ENCODE measurements at regions of chr5 and their contacts with region 1.

Region 1: DNA sequence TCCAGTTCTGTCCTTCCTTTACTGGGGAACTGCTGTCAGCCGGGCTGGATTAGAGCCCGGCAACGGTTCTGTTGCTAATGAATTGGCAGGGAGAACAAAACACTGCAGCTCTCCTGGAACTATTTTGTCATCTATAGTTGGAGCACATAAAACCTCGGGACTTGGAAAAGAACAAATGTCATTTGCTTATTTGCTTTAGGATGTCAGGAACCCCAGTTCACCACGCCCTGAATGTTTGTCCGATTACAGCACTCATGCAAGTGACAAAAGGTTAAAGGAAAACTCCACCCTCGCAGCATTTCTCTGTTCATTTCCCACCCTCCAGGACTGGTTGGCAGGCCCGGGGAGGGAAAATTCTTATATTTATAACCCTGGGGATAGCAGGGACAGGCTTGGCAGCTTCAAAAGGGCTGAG is 66.4 kb upstream of the PLPP1 start:
- DNase-seq: peak; percentile 63 to 97
- H3K4me3 ChIP-seq: peak overlapping the region in 1 of 2 donors; percentile 36
- H3K27ac ChIP-seq: peak overlapping the region; percentile 92 to 93
- H3K4me1 ChIP-seq: peaks cover 21 to 79% of the 10 kb centered on the region in 2 donors
- H3K27me3 ChIP-seq: no peaks in the 10 kb centered on the region
- CTCF ChIP-seq: no peak

Region 2: DNA sequence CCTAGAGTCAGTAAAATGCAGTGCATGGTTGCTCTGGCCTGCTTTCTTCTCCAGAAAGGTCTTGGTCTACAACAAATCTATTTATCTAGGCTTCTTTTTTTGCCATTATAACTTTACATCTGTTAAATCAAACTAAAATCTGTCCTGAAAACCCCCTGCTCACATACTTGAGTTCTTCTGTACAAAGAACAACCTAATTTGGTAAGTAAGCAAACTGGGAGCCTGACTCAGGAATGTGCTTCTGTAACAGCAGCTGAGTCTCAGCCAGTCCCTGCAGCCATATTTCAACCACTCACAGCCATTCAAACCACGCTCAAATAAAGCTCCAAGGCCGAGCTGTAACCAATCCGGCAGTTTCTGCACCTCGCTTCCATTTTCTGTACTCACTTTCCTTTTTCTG is 162.2 kb before region 1 on chr5:
- intact Hi-C with region 1: loop called (anchors 5 kb)
- DNase-seq: peak in 1 of 2 donors; percentile 77
- H3K4me3 ChIP-seq: no peak overlapping the region
- H3K27ac ChIP-seq: peak overlapping the region; percentile 87 to 92
- H3K4me1 ChIP-seq: peaks cover 14 to 36% of the 10 kb centered on the region in 2 donors
- H3K27me3 ChIP-seq: no peaks in the 10 kb centered on the region
- CTCF ChIP-seq: no peak

Region 3: GRCh38 chr5:55517804-55518203 is 83.4 kb before region 1 on chr5:
- intact Hi-C with region 1: no loop called
- DNase-seq: no peak
- H3K4me3 ChIP-seq: no peak overlapping the region
- H3K27ac ChIP-seq: no peak overlapping the region
- H3K4me1 ChIP-seq: peaks cover 3 to 22% of the 10 kb centered on the region in 2 donors
- H3K27me3 ChIP-seq: no peaks in the 10 kb centered on the region
- CTCF ChIP-seq: no peak

Region 4: DNA sequence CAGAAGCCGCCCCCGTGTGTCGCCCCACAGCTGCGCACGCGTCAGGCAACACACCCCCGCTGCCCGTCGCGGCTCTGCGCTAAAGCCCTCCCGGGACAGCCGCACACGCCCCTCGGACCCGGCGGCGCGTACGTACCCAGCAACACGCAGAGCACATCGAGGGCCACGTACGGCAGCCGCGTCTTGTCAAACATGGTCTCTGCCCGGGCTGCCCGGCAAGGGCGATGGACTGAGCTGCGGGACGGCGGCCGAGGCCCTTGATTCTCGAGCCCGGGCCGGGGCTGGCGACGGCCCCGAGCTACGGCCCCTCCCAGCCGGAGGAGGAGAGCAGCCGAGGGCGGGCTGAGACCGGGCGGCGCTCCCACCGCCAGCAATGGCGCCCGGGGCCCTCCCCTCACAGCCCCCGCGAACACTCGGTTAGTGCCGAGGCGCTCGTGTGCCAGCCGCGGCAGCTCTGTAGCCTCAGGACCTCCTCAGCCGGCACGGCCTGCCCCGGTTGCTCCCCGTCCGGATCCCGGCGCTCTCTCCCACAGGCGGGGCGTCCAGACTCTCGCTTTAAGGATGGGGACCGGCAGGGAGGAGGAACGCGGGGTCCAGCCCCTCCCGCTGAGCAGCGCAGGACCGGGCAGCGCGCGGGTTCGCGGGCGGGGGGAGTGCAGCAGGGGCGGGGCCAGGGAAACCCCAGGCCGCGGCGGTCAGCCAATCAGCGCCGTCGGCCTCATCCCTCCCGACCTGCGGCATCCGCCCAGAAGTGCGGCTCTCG is 66.6 kb before region 1 on chr5 and contains the start of gene PLPP1:
- intact Hi-C with region 1: loop called (anchors 1 kb)
- DNase-seq: peak; percentile 70 to 95
- H3K4me3 ChIP-seq: peak within 1 kb of the TSS; percentile 87 to 91
- H3K27ac ChIP-seq: peak within 1 kb of the TSS; percentile 97 to 99
- H3K4me1 ChIP-seq: peaks cover 0 to 12% of the 10 kb centered on the region in 2 donors
- H3K27me3 ChIP-seq: no peaks in the 10 kb centered on the region
- CTCF ChIP-seq: peak in 1 of 3 experiments; percentile 19
- total RNA-seq, gene PLPP1: 1,314 TPM

Region 5: GRCh38 chr5:55568654-55569512 is 32.3 kb before region 1 on chr5:
- intact Hi-C with region 1: loop called (anchors 1 kb)
- DNase-seq: peak in 1 of 2 donors; percentile 82
- H3K4me3 ChIP-seq: peak overlapping the region in 1 of 2 donors; percentile 50
- H3K27ac ChIP-seq: peak overlapping the region; percentile 84 to 93
- H3K4me1 ChIP-seq: peaks cover 0 to 19% of the 10 kb centered on the region in 2 donors
- H3K27me3 ChIP-seq: no peaks in the 10 kb centered on the region
- CTCF ChIP-seq: no peak

Region 6: DNA sequence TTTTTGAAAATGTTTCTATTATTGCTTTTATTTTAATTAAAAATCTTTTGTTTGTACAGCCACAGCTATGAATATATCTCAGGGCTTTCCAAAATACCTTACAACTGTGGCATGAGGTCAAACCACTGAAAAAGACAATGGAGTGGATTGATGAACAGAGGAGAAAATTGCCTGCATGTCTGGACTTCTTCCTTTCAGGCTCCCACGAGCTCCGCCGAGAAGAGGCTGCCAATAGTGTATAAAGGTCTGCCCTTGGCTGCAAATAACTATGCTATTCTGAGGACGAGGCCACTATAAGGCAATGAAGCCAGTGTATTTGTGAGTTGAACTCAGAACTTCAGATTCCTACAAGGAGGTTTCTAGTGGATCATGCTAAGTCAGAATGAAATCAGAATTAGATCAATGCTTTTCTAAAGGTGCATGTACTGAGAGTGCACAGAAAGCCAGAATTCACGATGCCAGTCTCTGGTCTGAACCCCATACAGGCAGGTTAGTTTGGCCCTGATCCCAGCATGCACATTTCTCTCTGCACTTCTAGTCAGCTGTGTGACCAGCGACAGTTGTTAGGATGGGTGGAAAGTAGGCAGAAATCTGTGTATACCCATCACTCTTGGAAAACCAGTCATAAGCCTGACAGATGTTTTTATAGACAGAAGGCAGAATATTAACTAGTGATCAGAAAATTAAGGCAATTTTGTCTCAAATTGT is 23.7 kb before region 1 on chr5:
- intact Hi-C with region 1: loop called (anchors 2 kb)
- DNase-seq: peak in 1 of 2 donors; percentile 77
- H3K4me3 ChIP-seq: no peak overlapping the region
- H3K27ac ChIP-seq: peak overlapping the region; percentile 62 to 67
- H3K4me1 ChIP-seq: peaks cover 19 to 33% of the 10 kb centered on the region in 2 donors
- H3K27me3 ChIP-seq: no peaks in the 10 kb centered on the region
- CTCF ChIP-seq: no peak

Region 7: GRCh38 chr5:55621229-55621628 is 20.0 kb after region 1 on chr5:
- intact Hi-C with region 1: no loop called
- DNase-seq: no peak
- H3K4me3 ChIP-seq: no peak overlapping the region
- H3K27ac ChIP-seq: no peak overlapping the region
- H3K4me1 ChIP-seq: no peaks in the 10 kb centered on the region
- H3K27me3 ChIP-seq: no peaks in the 10 kb centered on the region
- CTCF ChIP-seq: no peak

Region 8: GRCh38 chr5:55633574-55634208 is 32.5 kb after region 1 on chr5:
- intact Hi-C with region 1: loop called (anchors 2 kb)
- DNase-seq: no peak
- H3K4me3 ChIP-seq: peak overlapping the region in 1 of 2 donors; percentile 35
- H3K27ac ChIP-seq: peak overlapping the region; percentile 64 to 70
- H3K4me1 ChIP-seq: peaks cover 0 to 26% of the 10 kb centered on the region in 2 donors
- H3K27me3 ChIP-seq: no peaks in the 10 kb centered on the region
- CTCF ChIP-seq: no peak

Region 9: DNA sequence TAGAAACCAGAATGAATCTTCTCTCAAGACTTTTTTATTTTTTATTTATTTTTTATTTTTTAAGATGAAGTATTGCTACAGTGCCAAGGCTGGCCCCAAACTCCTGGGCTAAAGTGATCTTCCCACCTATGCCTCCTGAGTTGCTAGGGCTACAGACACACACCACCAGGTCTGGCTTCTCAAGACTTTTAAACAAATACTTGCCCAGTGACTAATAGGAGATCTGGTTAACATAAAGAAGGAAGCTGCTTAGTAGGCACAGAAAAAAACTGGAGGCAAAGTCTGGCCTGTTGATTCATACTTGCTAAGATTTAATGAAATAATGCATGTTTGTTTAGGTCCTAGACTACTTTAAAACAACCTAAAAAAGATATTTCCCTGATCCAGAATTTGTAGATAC is 67.1 kb after region 1 on chr5:
- intact Hi-C with region 1: loop called (anchors 2 kb)
- DNase-seq: no peak
- H3K4me3 ChIP-seq: no peak overlapping the region
- H3K27ac ChIP-seq: peak overlapping the region; percentile 15 to 58
- H3K4me1 ChIP-seq: peaks cover 0 to 10% of the 10 kb centered on the region in 2 donors
- H3K27me3 ChIP-seq: no peaks in the 10 kb centered on the region
- CTCF ChIP-seq: no peak

Region 10: GRCh38 chr5:55680353-55680752 is 79.1 kb after region 1 on chr5:
- intact Hi-C with region 1: no loop called
- DNase-seq: no peak
- H3K4me3 ChIP-seq: no peak overlapping the region
- H3K27ac ChIP-seq: no peak overlapping the region
- H3K4me1 ChIP-seq: peaks cover 0 to 8% of the 10 kb centered on the region in 2 donors
- H3K27me3 ChIP-seq: no peaks in the 10 kb centered on the region
- CTCF ChIP-seq: no peak

Region 11: GRCh38 chr5:55771175-55771655 is 170.0 kb after region 1 on chr5:
- intact Hi-C with region 1: no loop called
- DNase-seq: no peak
- H3K4me3 ChIP-seq: no peak overlapping the region
- H3K27ac ChIP-seq: no peak overlapping the region
- H3K4me1 ChIP-seq: no peaks in the 10 kb centered on the region
- H3K27me3 ChIP-seq: no peaks in the 10 kb centered on the region
- CTCF ChIP-seq: no peak

Measured in ascending aorta (tissue), 2 donors.